CD14-positive monocyte (primary cell): ENCODE measurements at regions of chr10 and their contacts with region 1.

Region 1: DNA sequence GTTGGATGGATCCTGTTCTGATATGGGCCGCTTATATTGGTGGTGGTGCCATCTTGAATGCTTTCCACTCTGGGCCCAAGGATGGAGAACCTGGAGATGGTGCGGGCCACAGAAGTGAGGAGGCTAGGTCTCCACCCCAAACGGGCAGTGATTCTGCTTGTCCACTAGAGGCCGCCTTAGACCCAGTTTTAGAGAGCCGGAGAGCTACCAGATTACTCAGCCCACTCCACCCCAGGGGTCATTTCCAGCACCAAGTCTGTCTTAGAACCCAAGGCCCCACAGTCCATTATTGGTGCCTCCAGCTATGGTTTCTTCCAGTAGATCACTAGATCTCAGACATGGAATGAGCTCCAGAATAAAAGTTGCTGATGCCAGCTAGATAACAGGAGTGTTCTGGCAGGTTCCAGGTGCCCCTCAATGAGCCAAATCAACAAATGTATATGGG is 11.8 kb upstream of the CAMK2G start:
- DNase-seq: peak; percentile 73 to 85 (median 81)
- H3K4me3 ChIP-seq: no peak overlapping the region
- H3K4me3 Mint-ChIP-seq: no peak overlapping the region
- H3K27ac ChIP-seq: no peak overlapping the region
- H3K27ac Mint-ChIP-seq: peak overlapping the region in 2 of 7 donors; percentile 20 to 33
- H3K4me1 ChIP-seq: peaks cover 19 to 25% of the 10 kb centered on the region in 2 donors
- H3K4me1 Mint-ChIP-seq: peaks cover 21% of the 10 kb centered on the region
- H3K27me3 ChIP-seq: no peaks in the 10 kb centered on the region
- H3K27me3 Mint-ChIP-seq: peaks cover 0 to 2% (median 2%) of the 10 kb centered on the region in 3 donors
- CTCF ChIP-seq: peak; percentile 78

Region 2: DNA sequence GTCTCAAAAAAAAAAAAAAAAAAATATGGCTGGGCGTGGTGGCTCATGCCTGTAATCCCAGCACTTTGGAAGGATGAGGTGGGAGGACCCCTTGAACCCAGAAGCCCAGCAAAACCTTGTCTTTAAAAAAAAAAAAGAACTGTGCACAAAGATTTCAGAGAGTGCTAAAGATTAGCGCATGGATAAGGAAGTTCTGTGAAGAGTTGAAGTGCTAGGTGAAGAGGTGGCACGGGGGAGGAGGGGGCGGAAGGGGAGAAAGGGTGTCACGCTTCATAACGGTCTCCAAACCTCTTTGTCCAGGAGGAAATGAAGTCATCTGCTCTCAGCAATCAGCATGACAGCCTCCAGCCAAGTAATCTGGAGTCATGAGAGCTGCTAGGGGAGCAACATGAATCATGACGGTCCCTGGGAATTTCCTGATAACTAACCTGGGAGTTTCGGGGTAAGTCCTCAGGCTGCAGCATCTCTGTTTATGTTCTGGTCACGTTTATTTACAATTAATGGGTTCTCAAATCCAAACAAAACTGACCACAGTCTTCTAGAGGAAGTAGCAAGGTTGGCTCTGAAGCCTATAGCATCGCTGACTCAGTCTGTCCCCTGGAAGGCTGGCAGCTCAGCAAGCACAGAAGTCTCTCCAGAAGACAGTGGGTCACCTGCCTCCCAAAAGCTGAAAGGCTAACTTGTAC is 22.9 kb after region 1 on chr10:
- intact Hi-C with region 1: loop called in 1 of 2 experiments (anchors 2 kb)
- DNase-seq: peak; percentile 93 to 100 (median 93)
- H3K4me3 ChIP-seq: no peak overlapping the region
- H3K4me3 Mint-ChIP-seq: peak overlapping the region in 1 of 2 donors; percentile 30
- H3K27ac ChIP-seq: peak overlapping the region; percentile 41 to 47
- H3K27ac Mint-ChIP-seq: peak overlapping the region; percentile 57 to 95 (median 88)
- H3K4me1 ChIP-seq: peaks cover 66 to 74% of the 10 kb centered on the region in 2 donors
- H3K4me1 Mint-ChIP-seq: peaks cover 72% of the 10 kb centered on the region
- H3K27me3 ChIP-seq: peaks cover 0 to 5% of the 10 kb centered on the region in 2 donors
- H3K27me3 Mint-ChIP-seq: peaks cover 6 to 17% (median 12%) of the 10 kb centered on the region in 3 donors
- CTCF ChIP-seq: no peak

Region 3: GRCh38 chr10:73940634-73941221 is 54.6 kb after region 1 on chr10:
- intact Hi-C with region 1: loop called (anchors 2 kb)
- DNase-seq: peak; percentile 73 to 79 (median 77)
- H3K4me3 ChIP-seq: peak overlapping the region in 1 of 3 experiments; percentile 55
- H3K4me3 Mint-ChIP-seq: peak overlapping the region; percentile 64 to 90
- H3K27ac ChIP-seq: no peak overlapping the region
- H3K27ac Mint-ChIP-seq: peak overlapping the region in 4 of 7 donors; percentile 62 to 90 (median 87)
- H3K4me1 ChIP-seq: peaks cover 8% of the 10 kb centered on the region in 2 donors
- H3K4me1 Mint-ChIP-seq: peaks cover 9% of the 10 kb centered on the region
- H3K27me3 ChIP-seq: no peaks in the 10 kb centered on the region
- H3K27me3 Mint-ChIP-seq: peaks cover 1 to 3% (median 2%) of the 10 kb centered on the region in 3 donors
- CTCF ChIP-seq: peak; percentile 95